Activated CD4-positive, alpha-beta T cell treated with anti-CD3 and anti-CD28 coated beads, Interleukin-2, amount 10 ng/mL, durations not matched to agents 7 days and 5 days (primary cell): ENCODE measurements at regions of chr7 and their contacts with region 1.

Region 1: DNA sequence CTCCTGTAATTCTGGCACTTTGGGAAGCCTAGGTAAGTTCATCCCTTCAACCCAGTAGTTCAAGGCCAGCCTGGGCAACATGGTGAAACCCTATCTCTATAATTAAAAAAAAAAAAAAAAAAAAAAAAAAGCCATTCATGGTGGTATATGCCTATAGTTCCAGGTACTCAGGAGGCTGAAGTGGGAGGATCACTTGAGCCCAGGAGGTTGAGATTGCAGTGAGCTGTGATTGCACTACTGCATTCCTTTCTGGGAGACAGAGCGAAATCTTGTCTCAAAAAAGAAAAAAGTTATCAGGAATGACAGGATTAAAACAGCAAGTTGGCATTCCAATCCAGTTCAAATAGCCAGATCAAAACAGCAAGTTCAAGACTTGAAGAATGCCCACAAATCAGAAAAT is 29.6 kb upstream of the MTURN start:
- DNase-seq: no peak
- H3K4me3 Mint-ChIP-seq: no peak overlapping the region
- H3K27ac Mint-ChIP-seq: no peak overlapping the region
- H3K4me1 Mint-ChIP-seq: no peaks in the 10 kb centered on the region
- H3K27me3 Mint-ChIP-seq: no peaks in the 10 kb centered on the region

Region 2: GRCh38 chr7:28211006-28211405 is 1894.2 kb before region 1 on chr7:
- CTCF ChIA-PET with region 1: interaction called, 10 read pairs
- POLR2A ChIA-PET with region 1: no interaction called
- DNase-seq: no peak
- H3K4me3 Mint-ChIP-seq: no peak overlapping the region
- H3K27ac Mint-ChIP-seq: no peak overlapping the region
- H3K4me1 Mint-ChIP-seq: peaks cover 19% of the 10 kb centered on the region
- H3K27me3 Mint-ChIP-seq: peaks cover 10% of the 10 kb centered on the region

Region 3: GRCh38 chr7:29723599-29723998 is 381.6 kb before region 1 on chr7:
- CTCF ChIA-PET with region 1: no interaction called
- POLR2A ChIA-PET with region 1: no interaction called
- DNase-seq: no peak
- H3K4me3 Mint-ChIP-seq: no peak overlapping the region
- H3K27ac Mint-ChIP-seq: no peak overlapping the region
- H3K4me1 Mint-ChIP-seq: no peaks in the 10 kb centered on the region
- H3K27me3 Mint-ChIP-seq: peaks cover 23% of the 10 kb centered on the region